ENCODE measurements at regions of chr17 and their contacts with region 1.

Region 1: GRCh38 chr17:9402590-9403199 is 172.9 kb downstream of the STX8 start:
- ATAC-seq: peak in 3 of 8 experiments; percentile 35 to 58 (median 53)
- H3K4me3 ChIP-seq: no peak overlapping the region
- H3K27ac ChIP-seq: no peak overlapping the region
- H3K4me1 ChIP-seq: no peaks in the 10 kb centered on the region

Region 2: DNA sequence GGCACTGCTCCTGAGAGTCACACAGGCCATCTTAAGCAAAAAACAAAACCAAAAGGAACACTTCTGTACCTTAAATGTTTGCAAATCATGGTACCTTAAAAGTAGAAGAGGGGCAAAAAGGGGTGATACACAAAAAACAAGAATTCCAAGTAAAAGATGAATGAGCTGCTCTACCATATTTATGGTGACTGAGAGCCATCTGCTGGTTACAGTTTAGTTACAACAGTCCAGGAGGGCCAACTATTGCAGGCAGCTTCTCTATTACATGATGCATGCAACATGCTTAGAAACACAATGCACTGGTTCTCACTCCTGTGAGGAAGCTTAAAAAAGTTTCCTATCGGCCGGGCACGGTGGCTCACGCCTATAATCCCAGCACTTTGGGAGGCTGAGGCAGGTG is 119.4 kb after region 1 on chr17:
- in situ Hi-C with region 1: loop called in 1 of 9 experiments (anchors 25 kb)
- ATAC-seq: peak; percentile 26 to 89 (median 66)
- H3K4me3 ChIP-seq: no peak overlapping the region
- H3K27ac ChIP-seq: no peak overlapping the region
- H3K4me1 ChIP-seq: peaks cover 26 to 27% of the 10 kb centered on the region in 2 donors